B cell (primary cell): ENCODE measurements at regions of chr5 and their contacts with region 1.

Region 1: DNA sequence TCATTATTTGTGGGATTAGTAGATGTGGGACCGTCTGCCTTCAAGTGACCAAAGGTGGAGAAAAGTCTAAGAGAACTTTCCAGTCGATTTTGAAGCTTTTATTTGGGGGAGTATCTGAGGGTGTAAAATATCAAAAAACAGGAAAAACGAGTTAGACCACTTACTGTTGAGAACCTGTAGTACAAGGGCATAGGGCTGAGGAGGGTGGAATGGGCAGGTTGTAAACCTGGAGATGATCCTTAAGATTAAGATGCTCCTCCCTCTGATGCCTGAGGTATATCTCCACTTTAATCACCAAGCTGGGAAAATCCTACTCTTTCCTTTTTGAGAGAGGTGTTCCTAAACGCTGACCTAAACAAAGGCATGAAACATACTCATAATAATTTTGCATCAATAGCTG is 31.9 kb upstream of the GTF2H2C start:
- DNase-seq: no peak
- ATAC-seq: no peak
- H3K4me3 ChIP-seq: no peak overlapping the region
- H3K4me3 Mint-ChIP-seq: no peak overlapping the region
- H3K27ac ChIP-seq: no peak overlapping the region
- H3K27ac Mint-ChIP-seq: no peak overlapping the region
- H3K4me1 ChIP-seq: no peaks in the 10 kb centered on the region
- H3K4me1 Mint-ChIP-seq: no peaks in the 10 kb centered on the region
- H3K27me3 ChIP-seq: peaks cover 0 to 3% (median 0%) of the 10 kb centered on the region in 4 experiments
- H3K27me3 Mint-ChIP-seq: peaks cover 24% of the 10 kb centered on the region
- CTCF ChIP-seq: no peak

Region 2: DNA sequence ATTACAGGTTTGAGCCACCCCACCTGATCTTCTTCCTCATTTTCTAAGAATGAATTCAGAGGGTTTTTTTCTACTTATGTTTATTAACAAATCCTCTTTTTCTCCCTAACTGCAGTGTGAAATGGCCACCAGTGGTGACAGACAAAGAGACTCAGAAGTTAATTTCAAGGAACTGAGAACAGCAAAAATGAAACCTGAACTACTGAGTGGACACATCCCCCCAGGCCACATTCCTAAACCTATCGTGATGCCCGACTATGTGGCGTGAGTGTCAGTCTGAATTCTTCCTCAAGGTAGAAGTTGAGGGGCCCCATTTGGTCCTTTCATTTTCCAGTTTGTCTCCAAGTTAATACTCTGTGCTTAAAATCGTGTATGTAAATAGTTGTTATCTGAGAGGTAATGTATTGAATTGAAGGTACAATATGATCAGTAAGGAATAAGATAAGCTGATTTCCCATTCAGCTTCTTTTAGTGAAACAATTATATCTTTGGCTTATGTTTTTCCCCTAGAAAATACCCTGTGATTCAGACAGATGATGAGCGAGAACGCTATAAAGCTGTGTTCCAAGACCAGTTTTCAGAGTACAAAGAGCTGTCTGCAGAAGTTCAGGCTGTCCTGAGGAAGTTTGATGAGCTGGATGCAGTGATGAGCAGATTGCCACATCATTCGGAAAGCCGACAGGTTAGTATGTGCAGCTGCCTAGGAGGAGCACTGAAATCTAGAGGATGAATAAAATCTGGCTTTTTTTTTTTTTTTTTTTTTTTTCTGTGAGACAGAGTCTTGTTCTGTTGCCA is 95.4 kb before region 1 on chr5:
- CTCF ChIA-PET with region 1: no interaction called
- POLR2A ChIA-PET with region 1: no interaction called
- intact Hi-C with region 1: no loop called
- DNase-seq: no peak
- ATAC-seq: no peak
- H3K4me3 ChIP-seq: no peak overlapping the region
- H3K4me3 Mint-ChIP-seq: no peak overlapping the region
- H3K27ac ChIP-seq: no peak overlapping the region
- H3K27ac Mint-ChIP-seq: no peak overlapping the region
- H3K4me1 ChIP-seq: no peaks in the 10 kb centered on the region
- H3K4me1 Mint-ChIP-seq: peaks cover 5% of the 10 kb centered on the region
- H3K27me3 ChIP-seq: no peaks in the 10 kb centered on the region
- H3K27me3 Mint-ChIP-seq: no peaks in the 10 kb centered on the region
- CTCF ChIP-seq: no peak

Region 3: DNA sequence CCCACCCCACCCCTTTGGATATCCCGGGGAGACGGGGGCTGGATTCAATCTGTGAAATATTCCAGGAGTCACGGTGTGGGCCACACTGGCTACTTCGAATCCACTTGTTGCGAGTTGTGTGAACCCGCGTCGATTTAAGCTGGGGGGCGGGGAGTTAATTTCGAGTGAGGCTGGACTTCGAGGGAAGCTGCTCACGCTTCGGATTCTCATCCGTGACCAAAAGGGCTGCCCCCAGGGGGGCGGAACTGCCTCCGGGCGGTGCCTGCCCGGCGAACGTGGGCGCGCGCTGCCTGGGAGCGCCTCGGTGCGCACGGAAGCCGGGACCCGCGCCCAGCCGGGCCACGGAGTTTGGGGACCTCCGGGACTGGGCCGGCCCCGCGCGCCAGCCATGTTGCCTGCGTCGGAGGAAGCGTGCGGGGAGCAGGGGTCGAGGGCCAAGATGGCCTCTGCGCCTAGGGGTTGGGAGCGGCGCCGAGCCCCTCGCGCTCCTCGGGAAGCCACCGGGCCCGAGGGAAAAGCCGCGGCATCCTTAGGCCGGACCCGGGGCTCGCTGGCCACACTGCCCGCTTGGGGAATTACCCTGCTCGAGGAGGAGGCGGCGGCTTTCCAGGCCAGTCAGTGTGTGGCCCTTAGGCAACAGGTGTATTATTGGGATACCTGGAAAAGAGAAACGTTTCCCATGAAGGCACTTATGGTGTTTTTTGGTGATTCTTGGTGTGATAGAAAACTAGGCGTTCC is 34.5 kb before region 1 on chr5:
- CTCF ChIA-PET with region 1: no interaction called
- POLR2A ChIA-PET with region 1: interaction called, 10 read pairs
- intact Hi-C with region 1: no loop called
- DNase-seq: peak; percentile 22
- ATAC-seq: no peak
- H3K4me3 ChIP-seq: peak overlapping the region; percentile 13 to 55 (median 45)
- H3K4me3 Mint-ChIP-seq: peak overlapping the region; percentile 75
- H3K27ac ChIP-seq: no peak overlapping the region
- H3K27ac Mint-ChIP-seq: no peak overlapping the region
- H3K4me1 ChIP-seq: peaks cover 20 to 22% of the 10 kb centered on the region in 2 donors
- H3K4me1 Mint-ChIP-seq: peaks cover 17% of the 10 kb centered on the region
- H3K27me3 ChIP-seq: peaks cover 0 to 32% (median 24%) of the 10 kb centered on the region in 4 experiments
- H3K27me3 Mint-ChIP-seq: peaks cover 51% of the 10 kb centered on the region
- CTCF ChIP-seq: no peak